ENCODE measurements at regions of chr16 and their contacts with region 1.

Region 1: DNA sequence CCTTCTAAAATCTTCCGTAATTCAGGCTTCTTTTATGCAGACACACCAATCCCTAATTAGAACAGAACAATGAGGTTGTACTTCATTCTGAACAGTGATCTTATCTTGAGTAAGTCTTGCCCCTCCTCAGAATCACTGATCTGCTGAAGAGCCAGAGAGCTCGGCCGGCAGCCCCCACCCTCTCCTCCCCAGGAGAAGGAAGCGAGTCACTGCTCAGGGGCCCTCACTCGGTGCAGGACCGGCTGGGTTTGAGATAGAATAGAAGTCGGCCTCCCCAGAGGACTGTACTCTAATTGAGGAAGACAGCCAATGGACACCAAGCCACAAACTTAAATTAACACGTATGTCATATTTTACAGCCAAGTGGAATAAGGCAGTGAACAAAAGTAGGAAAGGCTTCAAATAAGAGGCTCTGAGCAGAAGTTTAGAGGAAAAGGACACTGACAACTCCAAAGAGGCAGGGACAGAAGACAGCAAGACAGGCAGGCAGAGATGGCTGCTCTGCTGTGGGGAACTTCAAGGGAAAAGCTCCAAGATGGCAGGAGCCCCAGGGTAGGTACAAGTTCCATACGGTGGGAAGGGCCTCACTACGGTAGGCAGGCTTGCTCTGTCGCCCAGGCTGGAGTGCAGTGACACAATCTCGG is 18.6 kb downstream of the CREBBP start:
- DNase-seq: peak; percentile 32
- H3K27ac ChIP-seq: peak overlapping the region; percentile 33; the same call in 1 of the 2 replicates
- CTCF ChIP-seq: no peak

Region 2: DNA sequence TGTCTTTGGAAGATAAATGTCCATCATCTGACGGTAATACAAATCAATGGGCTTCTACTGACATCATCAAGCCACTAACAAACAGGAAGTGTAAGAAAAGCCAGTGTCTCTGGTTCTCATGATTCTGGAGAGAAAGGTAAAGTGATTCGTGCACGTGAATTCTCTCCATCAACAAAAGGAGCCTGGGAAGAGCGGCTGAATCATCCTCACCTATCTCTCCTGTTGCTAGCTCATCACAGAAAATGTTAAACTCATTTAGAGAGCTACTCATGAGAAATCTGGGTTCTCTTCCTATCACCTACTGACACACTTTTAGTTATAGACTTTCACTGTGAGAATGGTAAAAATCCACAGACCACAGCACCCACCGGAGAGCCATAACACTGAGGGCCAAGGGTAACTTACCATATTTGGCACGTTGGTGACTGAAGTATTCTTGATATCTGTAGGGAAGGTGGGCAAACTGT is 51.7 kb before region 1 on chr16:
- CTCF ChIA-PET with region 1: no interaction called
- POLR2A ChIA-PET with region 1: no interaction called
- DNase-seq: no peak
- H3K27ac ChIP-seq: no peak overlapping the region
- CTCF ChIP-seq: no peak

Region 3: DNA sequence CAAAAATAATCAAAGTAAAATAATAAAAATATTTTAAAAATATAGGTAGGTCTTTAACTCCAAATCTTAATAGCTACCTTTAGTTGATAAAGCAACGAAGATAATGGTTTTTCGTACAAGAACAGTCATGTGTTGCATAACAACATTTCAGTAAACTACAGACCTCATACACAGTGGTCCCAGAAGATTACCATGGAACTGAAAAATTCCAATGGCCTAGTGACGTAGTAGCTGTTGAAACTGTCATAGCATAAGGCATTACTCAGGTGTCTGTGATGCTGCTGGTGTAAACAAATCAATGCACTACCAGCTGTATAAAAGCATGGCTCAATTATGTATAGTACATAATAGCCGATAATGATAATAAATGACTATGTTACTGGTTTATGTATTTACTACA is 25.3 kb before region 1 on chr16:
- CTCF ChIA-PET with region 1: no interaction called
- POLR2A ChIA-PET with region 1: no interaction called
- DNase-seq: no peak
- H3K27ac ChIP-seq: no peak overlapping the region
- CTCF ChIP-seq: no peak

Region 4: GRCh38 chr16:3904875-3905274 is 42.9 kb after region 1 on chr16:
- CTCF ChIA-PET with region 1: no interaction called
- POLR2A ChIA-PET with region 1: interaction called, 13 read pairs
- DNase-seq: no peak
- H3K27ac ChIP-seq: no peak overlapping the region
- CTCF ChIP-seq: no peak

Region 5: GRCh38 chr16:4298761-4299522 is 437.0 kb after region 1 on chr16:
- CTCF ChIA-PET with region 1: no interaction called
- POLR2A ChIA-PET with region 1: no interaction called
- DNase-seq: peak; percentile 96
- H3K27ac ChIP-seq: peak overlapping the region; percentile 99
- CTCF ChIP-seq: no peak